ENCODE measurements at regions of chr11 and their contacts with region 1.

Region 1: DNA sequence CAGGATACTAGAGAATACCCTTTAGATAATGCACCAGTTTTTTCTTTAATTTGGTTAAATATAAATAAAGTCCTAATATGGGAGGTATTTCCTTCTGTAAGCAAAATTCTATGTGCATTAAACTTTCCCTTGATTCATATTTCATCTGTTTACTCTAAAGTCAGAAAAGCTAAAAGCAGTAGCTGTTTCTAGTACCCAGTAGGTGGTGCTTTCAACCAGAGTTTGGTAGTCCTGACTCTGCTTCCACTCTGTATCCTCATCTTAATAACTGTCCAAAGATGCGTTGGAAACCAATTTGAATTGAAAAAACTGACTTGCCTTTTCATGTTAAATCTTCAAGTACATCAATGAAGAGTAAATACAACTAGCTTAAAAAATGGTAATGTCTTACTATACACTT is 1065.2 kb downstream of the JRKL start:
- DNase-seq: peak in 1 of 42 donors; percentile 35

Region 2: DNA sequence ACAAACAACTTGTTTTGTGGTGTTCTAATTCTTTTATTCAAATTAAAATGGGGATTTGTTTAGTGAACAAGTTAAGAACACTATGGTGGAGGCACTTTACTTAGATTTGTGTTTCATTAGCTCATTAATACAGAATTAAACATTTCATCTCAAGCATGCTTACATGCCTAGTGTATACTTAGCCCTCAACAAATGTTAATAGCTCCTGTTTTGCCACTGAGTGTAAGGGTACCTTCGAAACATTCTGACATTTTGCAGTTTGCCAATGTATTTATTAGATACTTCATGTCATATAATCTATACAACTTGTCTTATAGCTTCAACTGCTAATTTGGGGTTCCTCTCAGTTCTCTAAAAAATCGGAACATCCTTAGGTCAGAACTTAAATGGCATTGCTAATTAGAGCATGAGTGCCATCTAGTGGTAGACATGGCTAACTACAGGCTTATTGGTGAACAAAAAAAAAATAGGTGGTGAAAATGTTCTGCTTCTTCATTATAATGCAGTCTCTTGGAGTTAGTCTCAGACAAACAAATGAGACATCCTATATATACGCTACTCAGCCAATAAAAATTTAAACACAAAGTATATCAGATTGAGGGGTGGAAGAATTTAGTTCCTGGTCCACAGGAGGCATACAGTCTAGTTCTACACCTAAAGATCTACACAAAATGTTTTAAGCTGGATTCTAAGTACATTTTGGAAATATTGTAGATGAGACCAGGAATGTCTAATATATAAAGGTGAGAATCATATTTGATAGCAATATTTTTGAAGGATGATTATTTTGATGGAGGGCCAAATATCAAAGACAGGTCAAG is 1560.9 kb after region 1 on chr11:
- intact Hi-C with region 1: loop called (anchors 10 kb)
- DNase-seq: peak in 14 of 42 donors; percentile 7 to 65 (median 26)